ENCODE measurements at regions of chr3 and their contacts with region 1.

Region 1: DNA sequence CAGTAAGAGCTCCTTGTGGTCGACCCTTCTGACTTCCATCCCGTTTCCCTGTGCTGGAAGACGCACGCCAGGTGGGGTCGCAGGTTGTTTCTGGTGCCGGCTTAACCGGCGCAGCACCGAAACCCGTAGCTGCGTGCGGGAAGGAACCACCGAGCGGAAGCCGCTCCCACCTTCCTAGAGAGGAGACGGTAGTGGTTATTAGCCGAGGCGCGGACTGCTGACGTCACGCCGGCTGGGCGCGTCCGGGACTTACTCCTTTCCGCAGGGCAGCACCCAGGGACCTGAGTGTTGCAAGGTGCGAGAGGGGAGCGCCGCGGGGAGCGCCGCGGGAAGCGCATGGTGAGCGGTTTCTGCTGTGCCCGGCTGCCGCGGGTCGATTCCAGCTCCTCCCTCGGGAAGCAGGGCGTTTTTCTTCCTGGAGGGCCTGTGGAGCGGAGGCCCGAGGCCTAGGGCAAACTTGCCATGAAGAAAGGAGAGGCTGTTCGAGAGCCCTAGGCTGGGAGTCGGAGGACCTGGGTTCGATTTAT is at the start of gene ZNF501:
- DNase-seq: peak; percentile 79 to 91
- ATAC-seq: peak; percentile 86 to 96 (median 96)
- H3K4me3 ChIP-seq: peak within 1 kb of the TSS; percentile 60
- H3K4me3 Mint-ChIP-seq: peak within 1 kb of the TSS; percentile 99
- H3K27ac ChIP-seq: no peak within 1 kb of the TSS
- H3K27ac Mint-ChIP-seq: peak within 1 kb of the TSS; percentile 94 to 98
- H3K4me1 ChIP-seq: peaks cover 3% of the 10 kb centered on the region
- H3K4me1 Mint-ChIP-seq: peaks cover 17% of the 10 kb centered on the region in 2 donors
- H3K27me3 ChIP-seq: no peaks in the 10 kb centered on the region
- H3K27me3 Mint-ChIP-seq: no peaks in the 10 kb centered on the region
- CTCF ChIP-seq: no peak
- total RNA-seq, gene ZNF501: 0.40 to 2.2 (median 1.7) TPM

Region 2: DNA sequence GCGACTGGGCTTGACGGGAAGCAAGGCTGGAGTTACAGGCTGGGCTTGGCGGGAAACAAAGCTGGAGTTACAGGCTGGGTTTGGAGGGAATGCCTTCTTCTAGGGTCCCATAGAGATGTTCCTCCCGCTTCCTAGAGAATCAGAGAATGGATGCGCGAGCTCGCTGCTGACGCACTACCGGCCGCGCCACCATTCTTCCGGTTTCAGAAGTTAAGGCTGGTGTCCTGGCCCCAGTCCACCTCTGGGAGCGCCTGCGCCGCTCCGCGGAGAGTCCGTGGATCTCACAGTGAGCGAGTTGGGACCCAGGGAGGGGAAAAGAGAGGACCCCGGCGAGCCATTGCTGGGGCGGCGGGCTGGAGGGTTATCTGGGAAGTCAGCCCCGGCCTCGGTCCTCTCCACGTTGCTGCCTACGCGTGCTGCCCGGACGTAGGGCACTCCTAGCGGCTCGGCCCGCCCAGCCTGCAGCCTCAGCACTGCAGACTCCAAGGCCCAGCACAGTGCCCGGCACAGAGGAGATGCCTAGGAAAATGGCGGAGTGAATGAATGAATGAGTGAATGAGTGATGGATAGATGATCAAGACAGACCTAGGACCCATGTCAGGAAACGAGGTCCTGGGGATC is 16.9 kb before region 1 on chr3 and contains the start of gene ZNF502:
- intact Hi-C with region 1: loop called (anchors 1 kb)
- DNase-seq: peak; percentile 66 to 77
- ATAC-seq: peak; percentile 86 to 98 (median 96)
- H3K4me3 ChIP-seq: peak within 1 kb of the TSS; percentile 82
- H3K4me3 Mint-ChIP-seq: peak within 1 kb of the TSS; percentile 100
- H3K27ac ChIP-seq: peak within 1 kb of the TSS; percentile 62
- H3K27ac Mint-ChIP-seq: peak within 1 kb of the TSS; percentile 96
- H3K4me1 ChIP-seq: peaks cover 11% of the 10 kb centered on the region
- H3K4me1 Mint-ChIP-seq: peaks cover 14 to 17% of the 10 kb centered on the region in 2 donors
- H3K27me3 ChIP-seq: peaks cover 4% of the 10 kb centered on the region
- H3K27me3 Mint-ChIP-seq: peaks cover 9 to 29% of the 10 kb centered on the region in 2 donors
- CTCF ChIP-seq: peak; percentile 25
- total RNA-seq, gene ZNF502: 2.8 to 7.0 (median 4.4) TPM